ENCODE measurements at regions of chr2 and their contacts with region 1.

Region 1: DNA sequence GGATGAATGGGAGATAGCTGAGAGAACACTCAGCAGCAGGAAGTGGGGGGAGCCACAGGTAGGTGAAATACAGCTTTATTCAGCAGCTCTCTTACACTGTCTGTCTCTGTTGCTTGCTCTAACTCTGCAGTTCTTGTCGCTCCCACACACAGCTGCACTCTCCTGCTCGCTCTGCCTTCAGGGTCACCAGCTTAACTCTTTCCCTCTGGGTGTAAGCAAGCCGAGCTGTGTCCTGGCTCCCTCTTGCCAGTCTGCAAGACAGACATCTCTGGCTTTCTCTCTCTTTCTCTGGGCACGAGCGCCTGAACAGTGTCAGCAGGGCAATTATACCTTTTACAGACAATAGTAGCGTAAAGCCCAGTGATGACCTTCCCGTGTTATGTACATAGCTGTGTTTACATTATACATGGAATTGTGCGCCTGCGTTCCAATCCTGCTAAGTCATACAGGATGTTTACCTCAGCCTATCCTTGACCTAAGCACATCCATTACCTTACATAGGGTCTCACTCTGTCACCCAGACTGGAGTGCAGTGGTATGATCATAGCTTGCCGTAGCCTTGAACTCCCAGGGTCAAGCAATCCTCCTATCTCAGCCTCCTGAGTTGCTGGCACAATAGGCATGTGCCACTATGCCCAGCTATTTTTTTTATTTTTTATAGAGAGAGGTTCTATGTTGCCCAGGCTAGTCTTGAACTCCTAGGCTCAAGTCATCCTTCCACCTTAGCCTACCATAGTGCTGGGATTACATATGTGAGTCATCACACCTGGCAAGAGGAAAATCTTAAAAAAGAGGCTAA is 57.8 kb upstream of the CHN1 start:
- DNase-seq: no peak
- CTCF ChIP-seq: no peak

Region 2: GRCh38 chr2:175080479-175080878 is 17.5 kb after region 1 on chr2:
- CTCF ChIA-PET with region 1: interaction called, 17 read pairs
- POLR2A ChIA-PET with region 1: no interaction called
- DNase-seq: no peak
- CTCF ChIP-seq: no peak

Region 3: DNA sequence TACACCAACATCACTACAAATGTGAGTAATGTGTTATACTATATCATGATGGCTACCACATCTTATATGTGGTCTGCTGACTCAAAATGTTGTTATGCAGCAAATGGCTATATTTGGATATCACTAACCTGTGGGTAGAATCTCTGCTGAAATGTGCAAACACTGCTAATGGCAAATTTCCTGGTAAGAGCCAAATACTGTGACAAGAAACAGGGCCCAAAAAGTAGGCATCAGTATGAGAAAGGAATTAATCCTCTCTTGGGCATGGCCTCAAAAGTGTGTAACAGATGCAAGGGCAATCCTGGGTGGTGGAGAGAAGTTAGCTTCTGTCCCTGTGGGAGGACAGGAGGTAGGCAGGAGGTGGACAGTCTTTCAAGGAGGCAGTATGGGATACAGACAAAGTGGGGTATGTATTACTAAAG is 91.7 kb after region 1 on chr2:
- CTCF ChIA-PET with region 1: no interaction called
- POLR2A ChIA-PET with region 1: no interaction called
- DNase-seq: no peak
- CTCF ChIP-seq: no peak

Measured in GM10248 (cell line).